ENCODE measurements at regions of chr5 and their contacts with region 1.

Region 1: GRCh38 chr5:95781101-95781583 is 41.4 kb downstream of the GLRX start:
- DNase-seq: peak; percentile 44 to 85 (median 66)
- ATAC-seq: peak; percentile 96 to 99
- H3K4me3 Mint-ChIP-seq: peak overlapping the region; percentile 66 to 87 (median 74)
- H3K27ac Mint-ChIP-seq: peak overlapping the region in 9 of 10 donors; percentile 6 to 90 (median 67)
- H3K4me1 Mint-ChIP-seq: peaks cover 7 to 27% (median 14%) of the 10 kb centered on the region in 4 donors
- H3K27me3 Mint-ChIP-seq: no peaks in the 10 kb centered on the region

Region 2: GRCh38 chr5:95760273-95761191 is 20.6 kb before region 1 on chr5:
- POLR2A ChIA-PET with region 1: no interaction called
- DNase-seq: peak in 3 of 10 donors; percentile 31 to 35 (median 32)
- ATAC-seq: peak; percentile 85 to 92
- H3K4me3 Mint-ChIP-seq: peak overlapping the region; percentile 56 to 88 (median 78)
- H3K27ac Mint-ChIP-seq: peak overlapping the region; percentile 71 to 92 (median 89)
- H3K4me1 Mint-ChIP-seq: peaks cover 7 to 43% (median 22%) of the 10 kb centered on the region in 4 donors
- H3K27me3 Mint-ChIP-seq: no peaks in the 10 kb centered on the region

Region 3: DNA sequence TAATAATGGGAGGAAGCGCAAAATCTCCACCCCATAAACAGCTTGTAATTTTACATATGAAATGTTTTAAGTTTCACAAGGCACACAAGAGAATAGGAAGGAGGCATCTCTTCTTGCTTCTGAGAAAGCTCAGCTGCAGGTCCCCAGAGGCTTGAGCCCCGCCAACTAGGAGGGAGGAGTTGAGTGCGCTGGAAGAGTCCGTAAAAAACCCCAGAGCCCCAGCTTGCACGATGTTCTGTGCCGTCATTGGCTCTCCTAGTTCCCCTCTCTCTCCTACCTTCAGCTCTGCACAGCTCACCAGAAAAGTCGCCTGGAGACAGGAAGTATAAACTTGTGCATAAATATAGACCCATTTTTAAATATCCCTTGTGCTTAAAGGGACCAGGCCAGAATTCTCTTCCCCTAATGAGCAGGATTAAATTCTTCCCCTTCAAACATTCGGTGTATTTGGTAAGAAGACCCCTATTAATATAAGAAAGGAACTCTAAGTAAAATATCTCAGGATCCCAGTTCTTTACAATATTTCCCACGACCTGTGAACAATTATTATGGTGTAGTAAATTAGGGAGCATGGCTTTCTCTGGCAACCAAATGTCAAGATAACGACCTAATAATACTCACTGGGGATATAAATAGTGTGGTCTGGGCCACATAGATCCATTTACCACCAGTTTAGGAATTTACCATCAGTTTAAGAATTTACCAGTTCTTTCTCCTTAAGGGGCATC is 27.7 kb after region 1 on chr5:
- POLR2A ChIA-PET with region 1: interaction called, 14 read pairs
- DNase-seq: peak; percentile 63 to 93 (median 82)
- ATAC-seq: peak; percentile 98 to 99
- H3K4me3 Mint-ChIP-seq: peak overlapping the region; percentile 34 to 87 (median 76)
- H3K27ac Mint-ChIP-seq: peak overlapping the region; percentile 85 to 97 (median 93)
- H3K4me1 Mint-ChIP-seq: peaks cover 42 to 63% (median 62%) of the 10 kb centered on the region in 4 donors
- H3K27me3 Mint-ChIP-seq: no peaks in the 10 kb centered on the region

Region 4: DNA sequence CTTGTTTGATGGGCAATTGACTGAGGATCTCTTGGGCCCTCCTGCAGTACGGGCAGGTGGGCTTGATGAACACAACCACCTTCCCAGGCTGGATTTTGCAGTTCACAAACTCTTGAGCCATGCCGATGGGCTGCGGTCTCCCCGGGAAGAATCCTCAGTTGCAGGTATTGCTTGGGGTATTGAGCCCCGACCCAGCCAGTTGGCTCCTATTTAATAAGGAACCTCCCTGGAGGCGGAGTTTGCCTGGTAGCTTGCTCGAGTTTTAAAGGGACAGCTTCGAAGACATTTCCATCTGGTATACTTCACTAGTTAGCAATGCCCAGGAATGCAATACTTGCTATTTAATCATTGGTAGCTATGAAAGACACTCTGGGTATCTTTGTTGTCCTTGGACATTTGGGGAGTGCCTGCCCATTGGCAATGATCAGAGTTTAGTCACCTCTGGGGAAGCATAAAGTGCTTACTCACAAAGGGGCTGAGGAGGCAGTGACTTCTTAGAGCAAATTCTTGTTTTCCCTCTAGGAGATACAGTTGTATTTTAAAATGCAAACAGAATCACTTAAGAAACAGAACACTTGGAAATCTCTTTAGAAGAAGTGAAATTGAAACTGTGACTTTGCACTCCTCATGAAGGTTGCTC is 41.5 kb after region 1 on chr5 and contains the start of gene GLRX:
- POLR2A ChIA-PET with region 1: interaction called, 13 read pairs
- DNase-seq: peak in 9 of 10 donors; percentile 26 to 75 (median 56)
- ATAC-seq: peak; percentile 36 to 49
- H3K4me3 Mint-ChIP-seq: peak within 1 kb of the TSS; percentile 89 to 99 (median 98)
- H3K27ac Mint-ChIP-seq: peak within 1 kb of the TSS; percentile 79 to 97 (median 95)
- H3K4me1 Mint-ChIP-seq: peaks cover 40 to 78% (median 68%) of the 10 kb centered on the region in 4 donors
- H3K27me3 Mint-ChIP-seq: no peaks in the 10 kb centered on the region
- polyA plus RNA-seq, gene GLRX: 133 to 232 (median 148) TPM

Region 5: GRCh38 chr5:95835682-95836385 is 54.7 kb after region 1 on chr5:
- POLR2A ChIA-PET with region 1: interaction called, 21 read pairs
- DNase-seq: peak in 3 of 10 donors; percentile 31 to 35 (median 32)
- ATAC-seq: peak; percentile 19 to 36
- H3K4me3 Mint-ChIP-seq: peak overlapping the region; percentile 86 to 96 (median 91)
- H3K27ac Mint-ChIP-seq: peak overlapping the region; percentile 87 to 98 (median 95)
- H3K4me1 Mint-ChIP-seq: peaks cover 33 to 67% (median 63%) of the 10 kb centered on the region in 4 donors
- H3K27me3 Mint-ChIP-seq: no peaks in the 10 kb centered on the region

Region 6: DNA sequence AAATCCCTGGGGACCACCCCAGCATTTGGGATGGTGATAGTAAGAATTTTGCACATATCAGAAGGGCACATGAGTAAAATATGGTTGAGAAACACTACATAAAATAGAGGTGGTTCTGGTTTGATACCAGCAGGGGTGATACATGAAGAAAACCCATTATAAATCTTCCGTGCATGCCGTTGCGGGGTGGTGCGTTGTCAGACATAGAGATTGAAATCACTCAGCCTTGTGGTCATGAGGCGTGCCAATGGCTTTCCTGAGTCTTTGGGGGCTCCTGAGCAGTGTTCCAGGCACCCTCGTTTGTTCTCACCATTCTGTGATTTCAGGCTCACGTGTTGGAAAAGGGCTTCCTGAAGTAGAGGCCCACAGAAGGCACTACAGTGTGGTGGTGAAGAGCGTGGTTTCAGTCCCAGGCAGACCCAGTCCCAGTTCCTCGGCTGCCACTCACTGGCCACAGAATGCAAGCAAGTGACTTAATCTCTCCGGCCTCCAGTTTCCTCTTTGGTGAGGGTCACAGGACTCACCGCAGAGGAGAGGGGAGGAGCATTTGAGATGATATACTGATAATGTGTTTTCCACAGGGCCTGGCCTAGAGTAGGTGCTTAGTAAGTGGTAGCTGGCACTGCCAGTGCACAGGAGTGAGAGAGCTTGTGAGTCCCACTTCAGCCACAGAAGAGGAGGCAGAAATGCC is 61.9 kb after region 1 on chr5:
- POLR2A ChIA-PET with region 1: interaction called, 19 read pairs
- DNase-seq: peak in 8 of 10 donors; percentile 23 to 76 (median 38)
- ATAC-seq: peak; percentile 82 to 87
- H3K4me3 Mint-ChIP-seq: peak overlapping the region; percentile 16 to 70 (median 59)
- H3K27ac Mint-ChIP-seq: peak overlapping the region; percentile 80 to 94 (median 90)
- H3K4me1 Mint-ChIP-seq: peaks cover 11 to 38% (median 27%) of the 10 kb centered on the region in 4 donors
- H3K27me3 Mint-ChIP-seq: no peaks in the 10 kb centered on the region